ENCODE measurements at regions of chr1 and their contacts with region 1.

Region 1: DNA sequence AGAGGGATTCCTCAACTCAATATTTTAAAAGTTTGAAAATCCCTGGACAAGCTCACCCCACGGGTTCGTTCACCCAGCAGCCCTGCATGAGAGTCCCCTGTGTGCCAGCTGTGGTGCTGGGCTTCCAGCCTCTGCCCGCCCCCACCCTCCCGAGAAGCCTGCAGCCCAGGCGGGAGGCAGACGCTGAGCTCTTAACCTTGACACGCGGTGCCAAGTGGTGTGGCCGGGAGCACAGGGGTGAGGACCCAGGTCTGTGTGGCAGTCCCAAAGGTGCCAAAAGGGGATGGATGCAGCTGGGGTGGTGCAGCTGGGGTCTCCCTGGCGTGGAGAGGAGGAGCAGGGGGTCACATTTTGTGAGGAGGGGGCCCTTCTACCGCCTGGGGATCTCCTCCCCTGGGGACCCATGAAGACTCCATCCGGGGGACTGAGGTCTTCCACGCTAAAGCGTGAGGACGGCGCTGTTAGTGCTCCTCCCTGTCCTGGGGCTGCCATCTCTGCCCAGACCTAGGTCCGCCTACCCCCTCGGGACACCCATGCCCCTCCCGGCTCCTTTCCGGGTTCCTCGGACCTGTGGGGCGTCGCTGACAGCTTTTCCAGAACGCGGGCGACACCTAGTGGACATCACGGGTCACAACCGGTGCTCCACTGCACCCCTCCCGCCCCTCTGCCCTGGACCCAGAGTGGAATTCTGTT is 12.9 kb downstream of the PLA2G2F start:
- DNase-seq: peak; percentile 92
- CTCF ChIP-seq: peak; percentile 83

Region 2: DNA sequence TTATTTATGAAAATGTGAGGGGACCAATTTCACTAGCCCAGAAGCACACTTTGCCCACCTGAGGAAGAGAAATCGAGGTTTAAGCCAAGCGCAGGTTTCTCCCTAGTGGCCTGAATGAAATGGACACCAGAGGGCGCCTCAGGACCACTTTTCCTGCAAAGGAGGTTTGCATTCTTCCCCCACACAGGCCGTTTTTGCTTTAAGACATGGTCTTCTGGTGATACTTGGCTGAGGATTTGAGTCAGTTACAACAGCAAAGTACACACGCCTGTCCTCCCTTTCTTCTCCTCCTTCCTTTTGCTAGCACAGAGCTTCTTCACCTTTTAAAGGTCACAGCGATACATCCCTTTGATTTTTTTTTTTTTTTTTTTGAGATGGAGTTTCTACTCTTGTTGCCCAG is 234.0 kb before region 1 on chr1:
- CTCF ChIA-PET with region 1: interaction called, 98 read pairs
- POLR2A ChIA-PET with region 1: no interaction called
- DNase-seq: peak; percentile 89
- CTCF ChIP-seq: peak; percentile 85

Region 3: DNA sequence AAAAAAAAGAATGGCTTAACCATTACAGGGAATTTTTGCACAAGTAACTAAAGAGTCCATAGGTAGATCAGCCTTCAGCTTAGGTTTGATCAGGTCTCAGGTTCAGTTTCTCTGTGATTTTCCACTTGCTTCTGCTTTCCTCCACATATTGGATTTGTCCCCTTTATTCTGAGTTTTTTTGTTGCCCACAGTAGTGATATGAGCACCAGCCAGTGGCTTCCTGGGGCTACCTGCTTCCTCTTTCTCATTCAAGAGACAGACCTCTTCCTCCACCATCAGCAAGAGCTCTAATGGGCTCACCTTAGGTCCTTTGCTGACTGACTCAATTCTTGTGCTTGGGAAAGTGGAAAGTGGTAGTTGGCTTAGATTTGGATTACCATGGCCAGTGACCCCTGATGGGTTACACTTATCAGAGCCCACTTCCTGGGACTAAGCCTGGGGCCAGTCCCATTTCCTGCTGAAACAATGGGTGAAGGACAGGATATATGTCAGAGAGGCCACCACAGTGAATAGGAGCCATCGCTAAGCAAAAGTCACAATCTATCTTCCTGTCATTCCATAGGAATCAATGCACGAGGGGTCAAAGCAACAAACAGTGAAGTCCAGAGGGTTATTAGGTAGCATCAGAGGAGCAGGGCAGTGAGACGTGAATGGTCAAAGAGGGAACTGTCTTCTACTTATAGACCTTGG is 215.8 kb before region 1 on chr1:
- CTCF ChIA-PET with region 1: no interaction called
- POLR2A ChIA-PET with region 1: no interaction called
- DNase-seq: no peak
- CTCF ChIP-seq: no peak

Region 4: DNA sequence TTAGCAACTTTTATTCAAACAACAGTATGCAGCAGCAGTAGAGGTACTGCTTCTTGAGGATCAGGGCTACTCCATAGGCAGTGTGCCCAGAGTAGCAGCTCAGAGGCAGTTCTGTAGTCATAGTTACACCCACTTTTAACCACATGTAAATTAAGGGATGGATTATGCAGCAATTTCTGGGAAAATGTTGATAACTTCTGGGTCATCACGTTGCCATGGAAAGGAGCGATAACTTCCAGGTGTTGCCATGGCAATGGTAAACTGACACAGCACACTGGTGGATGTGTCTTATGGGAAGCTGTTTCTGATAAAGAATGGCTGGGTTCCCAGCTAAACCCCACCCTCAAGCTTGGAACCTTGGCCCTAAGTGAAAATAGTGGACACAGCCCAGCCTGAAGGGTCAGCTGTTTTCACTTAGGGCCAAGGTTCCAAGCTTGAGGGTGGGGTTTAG is 143.6 kb before region 1 on chr1:
- CTCF ChIA-PET with region 1: no interaction called
- POLR2A ChIA-PET with region 1: no interaction called
- DNase-seq: no peak
- CTCF ChIP-seq: no peak

Region 5: DNA sequence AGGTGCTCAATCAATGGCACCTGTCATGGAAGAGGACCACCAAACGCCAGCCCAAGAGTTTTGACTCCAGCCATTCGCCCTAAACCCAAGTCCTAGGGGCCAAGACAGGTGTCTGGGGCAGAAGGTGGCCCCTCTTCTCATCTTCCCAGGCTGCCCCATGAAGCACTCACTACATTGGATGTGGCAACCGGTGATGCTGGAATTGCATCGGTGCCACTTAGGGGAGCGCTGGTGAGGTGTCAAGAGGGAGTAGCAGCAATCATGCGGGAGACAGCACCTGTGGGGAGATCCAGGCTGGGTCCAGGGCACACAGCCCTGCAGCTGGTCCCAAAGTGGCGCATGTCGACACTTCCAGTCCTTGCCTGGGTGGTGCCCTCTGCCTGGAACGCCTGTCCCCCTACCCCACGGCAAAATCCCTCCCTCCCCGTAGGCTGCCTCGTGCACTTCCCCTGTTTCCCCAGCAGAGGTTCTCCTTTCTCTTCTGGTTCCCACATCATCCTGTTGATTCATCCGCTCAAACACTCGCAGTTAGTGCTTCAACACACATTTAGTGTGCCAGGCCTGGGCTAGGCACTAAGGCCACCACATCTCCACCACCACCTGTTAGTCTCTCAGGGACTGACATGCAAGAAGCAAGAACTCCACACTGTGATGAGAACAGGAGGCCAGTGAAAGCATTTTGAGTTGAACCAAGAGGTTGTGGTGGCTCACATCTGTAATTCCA is 51.3 kb before region 1 on chr1:
- CTCF ChIA-PET with region 1: interaction called, 94 read pairs
- POLR2A ChIA-PET with region 1: interaction called, 3 read pairs
- DNase-seq: peak; percentile 77
- CTCF ChIP-seq: peak; percentile 79

Region 6: DNA sequence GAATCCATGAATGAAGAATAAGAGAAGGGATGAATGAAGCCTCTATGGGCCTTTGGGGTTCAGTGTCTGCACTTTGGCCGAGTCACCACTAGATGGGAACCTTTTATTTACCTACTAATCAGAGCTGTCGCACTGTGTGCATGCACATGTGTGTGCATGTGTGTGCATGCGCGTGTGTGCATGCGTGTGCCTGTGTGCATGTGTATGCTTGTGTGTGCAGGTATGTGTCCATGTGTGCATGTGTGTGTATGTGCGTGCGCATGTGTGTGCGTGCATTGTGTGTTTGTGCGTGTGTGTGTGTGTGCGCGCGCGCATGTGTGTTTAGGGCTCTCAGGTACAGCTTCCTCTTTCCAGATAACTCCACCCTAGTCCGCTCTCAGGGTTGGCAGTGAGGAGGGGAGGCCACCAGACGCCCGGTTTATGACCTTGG is 13.5 kb after region 1 on chr1:
- CTCF ChIA-PET with region 1: interaction called, 46 read pairs
- POLR2A ChIA-PET with region 1: no interaction called
- DNase-seq: peak; percentile 61
- CTCF ChIP-seq: peak; percentile 30

Region 7: DNA sequence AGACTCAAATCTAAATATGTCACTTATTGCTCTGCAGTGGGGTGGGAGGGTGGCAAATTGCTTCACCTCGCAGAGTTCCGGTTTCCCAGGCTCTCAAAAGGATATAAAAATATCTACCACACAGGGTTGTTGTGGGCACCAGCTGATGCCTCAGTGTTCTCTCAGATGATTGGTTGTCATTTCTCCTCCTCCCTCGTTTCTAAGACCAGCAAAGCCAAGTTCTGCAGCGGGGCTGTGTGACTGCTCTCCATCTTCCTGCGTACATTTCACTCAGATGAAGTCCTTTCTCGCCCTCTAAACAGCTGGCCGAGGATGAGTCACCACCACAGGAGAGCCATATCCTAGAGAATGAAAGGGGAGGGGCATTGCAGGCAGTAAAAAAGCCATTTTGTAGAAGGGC is 103.6 kb after region 1 on chr1:
- CTCF ChIA-PET with region 1: no interaction called
- POLR2A ChIA-PET with region 1: no interaction called
- DNase-seq: no peak
- CTCF ChIP-seq: no peak

Measured in GM10248 (cell line).